CD8-positive, alpha-beta memory T cell (primary cell): ENCODE measurements at regions of chr17 and their contacts with region 1.

Region 1: GRCh38 chr17:76523084-76524037 is 14.1 kb downstream of the CYGB start:
- DNase-seq: peak; percentile 72 to 87 (median 76)
- H3K4me3 ChIP-seq: peak overlapping the region; percentile 44
- H3K4me3 Mint-ChIP-seq: peak overlapping the region in 6 of 7 donors; percentile 41 to 70 (median 60)
- H3K27ac ChIP-seq: no peak overlapping the region
- H3K27ac Mint-ChIP-seq: peak overlapping the region; percentile 79 to 95 (median 86)
- H3K4me1 ChIP-seq: peaks cover 19% of the 10 kb centered on the region
- H3K4me1 Mint-ChIP-seq: peaks cover 21 to 38% (median 27%) of the 10 kb centered on the region in 3 donors
- H3K27me3 ChIP-seq: no peaks in the 10 kb centered on the region
- H3K27me3 Mint-ChIP-seq: peaks cover 0 to 1% of the 10 kb centered on the region in 2 donors

Region 2: GRCh38 chr17:76337413-76337777 is 186.0 kb before region 1 on chr17:
- CTCF ChIA-PET with region 1: no interaction called
- POLR2A ChIA-PET with region 1: no interaction called
- DNase-seq: no peak
- H3K4me3 ChIP-seq: no peak overlapping the region
- H3K4me3 Mint-ChIP-seq: no peak overlapping the region
- H3K27ac ChIP-seq: no peak overlapping the region
- H3K27ac Mint-ChIP-seq: peak overlapping the region in 2 of 8 donors; percentile 11 to 47
- H3K4me1 ChIP-seq: no peaks in the 10 kb centered on the region
- H3K4me1 Mint-ChIP-seq: peaks cover 7 to 21% (median 14%) of the 10 kb centered on the region in 3 donors
- H3K27me3 ChIP-seq: no peaks in the 10 kb centered on the region
- H3K27me3 Mint-ChIP-seq: no peaks in the 10 kb centered on the region

Region 3: GRCh38 chr17:76452660-76453430 is 70.5 kb before region 1 on chr17 and contains the start of gene UBE2O:
- CTCF ChIA-PET with region 1: no interaction called
- POLR2A ChIA-PET with region 1: no interaction called
- DNase-seq: peak; percentile 92 to 95 (median 93)
- H3K4me3 ChIP-seq: peak within 1 kb of the TSS; percentile 63
- H3K4me3 Mint-ChIP-seq: peak within 1 kb of the TSS; percentile 27 to 94 (median 88)
- H3K27ac ChIP-seq: peak within 1 kb of the TSS; percentile 73
- H3K27ac Mint-ChIP-seq: peak within 1 kb of the TSS; percentile 46 to 98 (median 94)
- H3K4me1 ChIP-seq: peaks cover 17% of the 10 kb centered on the region
- H3K4me1 Mint-ChIP-seq: peaks cover 31 to 44% (median 44%) of the 10 kb centered on the region in 3 donors
- H3K27me3 ChIP-seq: no peaks in the 10 kb centered on the region
- H3K27me3 Mint-ChIP-seq: no peaks in the 10 kb centered on the region
- total RNA-seq, gene UBE2O: 33.6 to 35.0 TPM

Region 4: DNA sequence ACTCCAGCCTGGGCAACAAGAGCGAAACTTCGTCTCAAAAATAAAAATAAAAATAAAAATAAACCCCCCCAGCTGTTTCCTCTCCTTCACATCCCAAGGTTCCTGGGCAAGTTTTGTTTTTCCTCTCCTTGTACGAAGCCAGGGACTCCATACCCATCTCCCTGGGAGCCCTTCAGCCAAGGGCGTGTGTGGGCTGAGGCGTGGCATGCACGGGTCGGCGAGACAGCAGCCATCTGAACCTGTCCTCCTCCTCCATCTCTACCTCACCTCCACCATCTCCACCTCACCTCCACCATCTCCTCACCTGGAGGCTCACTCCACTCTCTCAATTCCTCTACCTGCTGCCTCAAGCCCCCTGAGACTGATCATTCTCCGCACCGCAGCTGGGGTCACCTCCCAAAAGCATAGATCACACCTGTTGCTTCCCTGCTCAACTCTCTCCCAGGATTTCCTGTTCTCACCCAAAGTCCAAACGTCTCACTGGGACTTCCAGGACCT is 39.1 kb before region 1 on chr17:
- CTCF ChIA-PET with region 1: no interaction called
- POLR2A ChIA-PET with region 1: no interaction called
- DNase-seq: no peak
- H3K4me3 ChIP-seq: no peak overlapping the region
- H3K4me3 Mint-ChIP-seq: no peak overlapping the region
- H3K27ac ChIP-seq: no peak overlapping the region
- H3K27ac Mint-ChIP-seq: peak overlapping the region in 2 of 8 donors; percentile 12 to 57
- H3K4me1 ChIP-seq: no peaks in the 10 kb centered on the region
- H3K4me1 Mint-ChIP-seq: peaks cover 4 to 20% (median 11%) of the 10 kb centered on the region in 3 donors
- H3K27me3 ChIP-seq: no peaks in the 10 kb centered on the region
- H3K27me3 Mint-ChIP-seq: no peaks in the 10 kb centered on the region

Region 5: GRCh38 chr17:76506408-76507349 is 16.7 kb before region 1 on chr17:
- CTCF ChIA-PET with region 1: interaction called, 43 read pairs
- POLR2A ChIA-PET with region 1: no interaction called
- DNase-seq: peak; percentile 79 to 90 (median 84)
- H3K4me3 ChIP-seq: no peak overlapping the region
- H3K4me3 Mint-ChIP-seq: peak overlapping the region in 1 of 7 donors; percentile 58
- H3K27ac ChIP-seq: no peak overlapping the region
- H3K27ac Mint-ChIP-seq: peak overlapping the region in 7 of 8 donors; percentile 12 to 87 (median 54)
- H3K4me1 ChIP-seq: peaks cover 27% of the 10 kb centered on the region
- H3K4me1 Mint-ChIP-seq: peaks cover 20 to 41% (median 23%) of the 10 kb centered on the region in 3 donors
- H3K27me3 ChIP-seq: no peaks in the 10 kb centered on the region
- H3K27me3 Mint-ChIP-seq: no peaks in the 10 kb centered on the region

Region 6: DNA sequence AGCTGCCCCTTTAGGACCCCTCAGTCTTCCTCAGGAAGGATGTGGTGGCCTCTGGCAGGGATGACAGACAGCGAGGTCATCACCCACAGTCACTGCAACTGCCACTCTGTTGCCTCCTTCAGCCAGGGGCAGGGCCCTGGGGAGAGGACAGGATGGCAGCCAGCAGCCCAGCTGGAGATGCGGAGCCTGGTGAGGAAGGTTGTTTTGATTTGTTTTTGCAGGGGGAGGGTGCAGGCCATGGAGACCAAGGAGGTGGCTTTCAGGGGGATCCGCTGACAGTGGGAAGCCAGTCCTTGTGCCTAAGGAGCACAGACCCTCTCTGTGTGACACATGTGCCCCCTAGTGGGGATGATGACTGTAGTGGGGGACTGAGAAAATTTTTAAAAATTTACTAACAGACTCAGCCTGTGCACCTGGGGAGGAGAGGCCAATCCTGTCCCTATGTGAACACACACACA is 23.9 kb after region 1 on chr17:
- CTCF ChIA-PET with region 1: interaction called, 97 read pairs
- POLR2A ChIA-PET with region 1: interaction called, 7 read pairs
- DNase-seq: peak; percentile 28 to 76 (median 55)
- H3K4me3 ChIP-seq: no peak overlapping the region
- H3K4me3 Mint-ChIP-seq: no peak overlapping the region
- H3K27ac ChIP-seq: no peak overlapping the region
- H3K27ac Mint-ChIP-seq: no peak overlapping the region
- H3K4me1 ChIP-seq: peaks cover 7% of the 10 kb centered on the region
- H3K4me1 Mint-ChIP-seq: peaks cover 0 to 2% (median 0%) of the 10 kb centered on the region in 3 donors
- H3K27me3 ChIP-seq: no peaks in the 10 kb centered on the region
- H3K27me3 Mint-ChIP-seq: peaks cover 5 to 11% of the 10 kb centered on the region in 2 donors

Region 7: GRCh38 chr17:76567634-76568432 is 44.5 kb after region 1 on chr17:
- CTCF ChIA-PET with region 1: interaction called, 18 read pairs
- POLR2A ChIA-PET with region 1: no interaction called
- DNase-seq: peak in 1 of 5 donors; percentile 21
- H3K4me3 ChIP-seq: no peak overlapping the region
- H3K4me3 Mint-ChIP-seq: peak overlapping the region in 5 of 7 donors; percentile 32 to 58 (median 52)
- H3K27ac ChIP-seq: no peak overlapping the region
- H3K27ac Mint-ChIP-seq: peak overlapping the region; percentile 63 to 93 (median 84)
- H3K4me1 ChIP-seq: peaks cover 12% of the 10 kb centered on the region
- H3K4me1 Mint-ChIP-seq: peaks cover 35 to 47% (median 41%) of the 10 kb centered on the region in 3 donors
- H3K27me3 ChIP-seq: no peaks in the 10 kb centered on the region
- H3K27me3 Mint-ChIP-seq: no peaks in the 10 kb centered on the region

Region 8: GRCh38 chr17:76623271-76624146 is 100.1 kb after region 1 on chr17:
- CTCF ChIA-PET with region 1: interaction called, 90 read pairs
- POLR2A ChIA-PET with region 1: interaction called, 5 read pairs
- DNase-seq: peak; percentile 64 to 83 (median 69)
- H3K4me3 ChIP-seq: no peak overlapping the region
- H3K4me3 Mint-ChIP-seq: no peak overlapping the region
- H3K27ac ChIP-seq: no peak overlapping the region
- H3K27ac Mint-ChIP-seq: peak overlapping the region in 1 of 8 donors; percentile 12
- H3K4me1 ChIP-seq: peaks cover 3% of the 10 kb centered on the region
- H3K4me1 Mint-ChIP-seq: peaks cover 0 to 6% (median 3%) of the 10 kb centered on the region in 3 donors
- H3K27me3 ChIP-seq: no peaks in the 10 kb centered on the region
- H3K27me3 Mint-ChIP-seq: peaks cover 1 to 11% of the 10 kb centered on the region in 2 donors